T-cell (primary cell): ENCODE measurements at regions of chr11 and their contacts with region 1.

Region 1: GRCh38 chr11:75158691-75159145 is 7.8 kb downstream of the SLCO2B1 start:
- DNase-seq: no peak
- ATAC-seq: no peak
- H3K4me3 ChIP-seq: no peak overlapping the region
- H3K4me3 Mint-ChIP-seq: no peak overlapping the region
- H3K27ac ChIP-seq: no peak overlapping the region
- H3K27ac Mint-ChIP-seq: no peak overlapping the region
- H3K4me1 ChIP-seq: no peaks in the 10 kb centered on the region
- H3K4me1 Mint-ChIP-seq: peaks cover 0 to 7% (median 0%) of the 10 kb centered on the region in 3 donors
- H3K27me3 ChIP-seq: no peaks in the 10 kb centered on the region
- H3K27me3 Mint-ChIP-seq: peaks cover 0 to 2% of the 10 kb centered on the region in 2 donors

Region 2: DNA sequence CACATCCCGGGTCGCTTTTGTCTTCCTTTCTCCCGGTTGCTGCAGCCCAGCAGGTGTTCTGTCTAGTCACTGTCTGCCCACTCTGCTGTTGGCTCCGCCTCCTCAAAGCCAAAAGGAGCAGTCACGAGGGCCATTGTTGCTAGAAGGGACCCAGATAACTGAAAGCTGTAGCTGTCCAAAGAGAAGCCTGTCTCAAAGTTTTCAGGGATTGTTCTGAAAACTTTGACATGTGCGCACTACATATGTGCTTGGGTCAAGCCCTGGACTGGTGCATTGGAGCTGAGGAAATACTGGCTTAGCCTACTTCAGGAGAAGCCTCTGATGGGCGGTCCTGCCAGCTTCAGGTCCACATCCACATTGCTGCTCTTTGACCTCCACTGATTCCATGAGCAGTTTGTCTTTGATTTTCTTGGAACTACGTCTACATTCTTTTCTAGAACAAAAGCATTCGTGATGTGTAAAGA is 53.2 kb before region 1 on chr11:
- CTCF ChIA-PET with region 1: no interaction called
- POLR2A ChIA-PET with region 1: interaction called in 1 of 2 experiments, 10 read pairs
- DNase-seq: no peak
- ATAC-seq: no peak
- H3K4me3 ChIP-seq: no peak overlapping the region
- H3K4me3 Mint-ChIP-seq: no peak overlapping the region
- H3K27ac ChIP-seq: no peak overlapping the region
- H3K27ac Mint-ChIP-seq: no peak overlapping the region
- H3K4me1 ChIP-seq: no peaks in the 10 kb centered on the region
- H3K4me1 Mint-ChIP-seq: no peaks in the 10 kb centered on the region
- H3K27me3 ChIP-seq: peaks cover 4 to 13% of the 10 kb centered on the region in 2 experiments
- H3K27me3 Mint-ChIP-seq: peaks cover 32 to 35% of the 10 kb centered on the region in 2 donors

Region 3: DNA sequence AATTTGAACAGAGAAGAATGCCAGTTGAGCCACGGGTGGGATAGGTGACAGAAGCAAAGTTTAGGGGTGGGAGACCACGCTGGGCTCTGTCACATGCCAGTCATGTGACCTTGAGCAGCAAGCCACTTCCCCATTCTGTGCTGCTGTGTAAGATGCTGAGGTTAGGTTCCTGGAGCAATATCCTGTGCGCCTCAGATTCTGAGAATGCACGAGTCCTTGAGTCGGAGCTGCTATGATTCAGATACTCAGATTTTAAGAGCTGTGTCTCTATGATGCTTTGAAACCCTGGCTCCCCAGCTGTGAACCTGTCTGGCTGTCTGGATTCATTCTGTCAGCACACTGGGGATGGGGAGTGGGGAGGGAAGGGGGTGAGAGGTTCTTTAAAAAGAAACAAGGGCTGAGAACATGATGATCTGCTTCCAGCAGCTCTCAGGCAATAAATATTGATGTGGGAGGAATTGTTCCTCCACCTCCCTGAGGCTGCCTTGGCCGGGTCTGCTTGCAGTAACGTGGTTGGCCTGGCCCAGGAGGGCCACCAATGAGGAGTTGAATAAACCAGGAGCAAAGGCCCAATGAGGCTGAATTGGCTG is 16.2 kb after region 1 on chr11:
- CTCF ChIA-PET with region 1: no interaction called
- POLR2A ChIA-PET with region 1: no interaction called
- DNase-seq: peak in 2 of 35 experiments; percentile 12 to 21
- ATAC-seq: peak in 3 of 4 experiments; percentile 71 to 87 (median 85)
- H3K4me3 ChIP-seq: no peak overlapping the region
- H3K4me3 Mint-ChIP-seq: peak overlapping the region in 1 of 3 donors; percentile 11
- H3K27ac ChIP-seq: no peak overlapping the region
- H3K27ac Mint-ChIP-seq: peak overlapping the region; percentile 78 to 85
- H3K4me1 ChIP-seq: peaks cover 0 to 16% of the 10 kb centered on the region in 2 experiments
- H3K4me1 Mint-ChIP-seq: peaks cover 13 to 16% (median 15%) of the 10 kb centered on the region in 3 donors
- H3K27me3 ChIP-seq: peaks cover 0 to 8% of the 10 kb centered on the region in 2 experiments
- H3K27me3 Mint-ChIP-seq: no peaks in the 10 kb centered on the region

Region 4: GRCh38 chr11:75191330-75191717 is 32.6 kb after region 1 on chr11:
- CTCF ChIA-PET with region 1: no interaction called
- POLR2A ChIA-PET with region 1: no interaction called
- DNase-seq: no peak
- ATAC-seq: no peak
- H3K4me3 ChIP-seq: no peak overlapping the region
- H3K4me3 Mint-ChIP-seq: no peak overlapping the region
- H3K27ac ChIP-seq: no peak overlapping the region
- H3K27ac Mint-ChIP-seq: no peak overlapping the region
- H3K4me1 ChIP-seq: no peaks in the 10 kb centered on the region
- H3K4me1 Mint-ChIP-seq: no peaks in the 10 kb centered on the region
- H3K27me3 ChIP-seq: peaks cover 0 to 20% of the 10 kb centered on the region in 2 experiments
- H3K27me3 Mint-ChIP-seq: no peaks in the 10 kb centered on the region